Mucosa of descending colon (tissue), 3 donors: ENCODE measurements at regions of chr22 and their contacts with region 1.

Region 1: DNA sequence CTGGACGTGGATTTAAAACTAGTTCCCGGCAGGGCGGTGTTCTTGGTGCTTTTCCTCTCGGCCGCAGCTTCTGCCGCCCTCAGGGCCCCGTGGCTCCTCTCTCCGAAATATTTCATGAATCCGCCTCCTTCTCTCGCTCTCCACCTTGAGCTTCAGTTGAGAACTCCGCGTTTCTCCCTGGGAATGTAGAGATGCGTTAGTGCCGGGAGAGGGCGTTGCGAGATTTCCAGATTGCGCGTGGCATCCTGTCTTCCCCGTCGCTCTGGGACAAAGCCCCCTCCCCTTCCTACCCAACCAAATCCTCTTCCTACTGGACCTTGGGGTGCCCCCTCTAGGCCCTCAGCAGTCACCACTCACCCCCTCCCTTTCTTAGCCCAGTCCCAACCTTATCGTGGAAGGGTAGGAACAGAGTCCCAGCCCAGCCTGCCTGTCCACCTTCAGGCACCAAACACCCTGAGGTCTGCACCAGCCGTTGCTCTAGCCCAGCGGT is 15.5 kb upstream of the RAC2 start:
- DNase-seq: no peak
- ATAC-seq: peak; percentile 48
- H3K4me3 ChIP-seq: no peak overlapping the region
- H3K4me1 ChIP-seq: peaks cover 14% of the 10 kb centered on the region
- CTCF ChIP-seq: no peak

Region 2: DNA sequence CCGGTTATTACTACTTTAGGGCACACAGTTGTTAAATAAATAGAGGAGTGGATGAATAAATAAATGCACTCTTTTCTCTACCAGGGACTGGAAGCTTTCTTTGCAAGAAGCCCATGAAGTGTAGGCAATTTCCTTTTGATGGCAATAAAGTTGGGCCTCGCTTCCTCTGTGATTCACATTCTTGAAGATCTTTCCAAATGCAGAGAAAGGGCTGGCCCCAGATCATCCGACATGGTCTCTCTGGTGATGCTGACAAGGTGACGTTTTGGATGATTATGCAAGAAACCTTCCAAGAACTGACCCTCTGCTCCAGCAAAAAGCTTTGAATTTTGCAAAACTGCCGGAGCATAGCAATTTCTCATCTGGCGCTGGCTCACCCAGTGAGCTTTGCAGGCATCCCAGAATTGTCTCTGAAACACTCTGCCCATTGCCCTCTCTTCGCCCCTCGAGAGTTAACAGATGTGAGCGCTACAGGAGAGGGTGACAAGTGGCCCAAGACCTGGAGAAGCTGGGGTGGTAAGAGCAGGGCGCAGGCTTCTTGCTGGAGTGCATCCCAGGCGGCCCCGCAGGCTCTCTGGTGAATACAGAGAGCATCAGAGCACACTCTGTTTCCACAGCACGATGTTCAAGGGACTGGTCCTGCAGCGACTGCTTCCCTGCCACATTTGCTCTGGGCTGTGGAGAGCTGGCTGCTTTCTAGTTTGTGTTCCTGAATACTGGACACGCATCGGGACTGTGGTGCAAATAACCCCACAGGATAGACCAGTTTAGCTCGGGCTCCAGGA is 472.2 kb before region 1 on chr22:
- intact Hi-C with region 1: loop called in 1 of 2 experiments (anchors 5 kb)
- DNase-seq: no peak
- ATAC-seq: no peak
- H3K4me3 ChIP-seq: no peak overlapping the region
- H3K4me1 ChIP-seq: no peaks in the 10 kb centered on the region
- CTCF ChIP-seq: no peak

Region 3: GRCh38 chr22:36986242-36986821 is 273.3 kb before region 1 on chr22:
- intact Hi-C with region 1: no loop called
- DNase-seq: peak in 2 of 3 donors; percentile 71 to 72
- ATAC-seq: peak; percentile 68
- H3K4me3 ChIP-seq: no peak overlapping the region
- H3K4me1 ChIP-seq: no peaks in the 10 kb centered on the region
- CTCF ChIP-seq: peak; percentile 59

Region 4: DNA sequence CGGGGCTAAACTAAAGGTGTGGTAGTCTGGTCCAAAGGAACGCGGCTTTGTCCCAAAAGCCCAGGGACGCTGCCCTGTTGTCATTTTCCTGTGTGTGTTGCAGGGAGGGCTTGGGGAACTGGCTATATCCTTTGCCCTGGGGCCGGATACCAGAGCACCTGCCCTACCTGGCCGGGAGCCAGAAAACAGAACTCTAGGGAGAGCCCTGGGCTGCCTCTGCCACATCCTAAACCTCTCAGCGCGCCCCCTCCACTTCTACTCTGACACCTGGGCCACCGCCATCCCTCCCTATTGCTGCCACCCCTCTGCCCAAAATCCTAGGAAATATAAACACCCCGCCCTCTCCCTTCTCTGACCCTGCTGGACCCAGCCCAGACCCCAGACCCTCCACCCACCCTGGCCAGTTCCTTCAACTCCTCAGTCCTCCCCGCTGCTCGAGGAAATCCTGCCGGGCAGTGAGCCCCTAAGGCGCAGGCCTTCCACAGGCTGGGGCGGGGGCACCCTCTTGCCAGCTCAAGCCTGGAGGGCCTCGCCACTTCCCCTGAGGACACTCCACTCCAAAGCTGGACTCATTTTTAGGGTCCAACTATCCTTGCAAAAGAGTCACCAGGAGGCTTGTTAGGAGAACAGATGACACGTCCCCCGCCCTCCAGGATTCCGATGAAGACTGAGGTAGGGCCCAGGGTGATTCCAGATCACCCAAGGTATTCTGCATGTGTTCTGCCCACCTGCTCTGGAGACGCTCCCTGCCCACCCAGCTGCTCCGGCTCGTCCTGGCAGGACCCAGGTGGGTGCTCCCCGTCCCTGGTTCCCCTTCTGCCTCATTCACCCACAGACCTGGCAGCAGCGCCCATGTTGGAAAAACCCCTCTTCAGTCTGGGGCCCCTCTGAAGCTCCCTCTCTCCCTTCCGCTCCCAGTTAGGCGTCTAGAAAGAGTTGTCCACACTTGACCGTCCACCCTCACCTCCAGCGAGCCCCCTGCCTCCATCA is 195.9 kb before region 1 on chr22:
- intact Hi-C with region 1: no loop called
- DNase-seq: peak in 2 of 3 donors; percentile 53 to 67
- ATAC-seq: peak; percentile 62
- H3K4me3 ChIP-seq: no peak overlapping the region
- H3K4me1 ChIP-seq: peaks cover 8% of the 10 kb centered on the region
- CTCF ChIP-seq: no peak

Region 5: DNA sequence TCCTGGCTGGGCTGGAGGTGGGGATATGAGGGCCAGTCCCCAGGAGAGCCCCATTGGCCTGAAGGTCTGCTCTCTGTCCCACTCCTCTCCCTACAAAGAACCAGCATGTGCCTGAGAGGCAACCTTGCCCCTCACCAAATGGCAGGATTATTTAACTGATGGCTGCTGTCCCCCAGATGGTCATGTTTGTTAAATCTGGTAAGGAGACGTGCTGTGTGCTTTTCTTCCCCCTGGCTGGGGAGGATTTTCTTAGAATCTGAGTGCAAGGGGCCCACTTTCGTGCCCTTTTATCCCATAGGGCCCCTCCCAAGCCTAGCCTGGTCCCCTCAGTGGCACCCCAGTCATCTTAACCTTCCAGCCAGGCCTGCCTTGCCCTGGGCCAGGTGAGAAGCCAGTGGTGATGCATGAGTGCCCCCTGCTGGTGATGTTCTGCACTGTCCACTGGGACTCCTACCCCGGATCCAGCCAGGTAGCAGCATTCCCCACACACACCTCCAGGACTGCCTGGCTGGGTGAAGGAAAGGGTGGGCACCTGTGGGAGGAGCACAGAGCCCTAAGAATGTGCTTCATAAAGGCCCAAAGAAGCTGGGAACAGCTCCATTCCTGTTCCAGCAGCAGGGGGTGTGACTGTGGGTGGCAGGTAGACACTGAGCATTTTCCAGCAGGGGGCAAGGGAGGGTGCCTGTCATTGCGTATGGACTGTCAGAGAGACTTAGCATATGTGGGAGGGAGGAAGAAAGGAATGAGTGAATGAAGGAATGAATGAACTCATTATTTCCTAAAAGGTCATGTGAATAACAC is 197.7 kb after region 1 on chr22:
- intact Hi-C with region 1: no loop called
- DNase-seq: peak; percentile 75 to 92 (median 87)
- ATAC-seq: peak; percentile 95
- H3K4me3 ChIP-seq: no peak overlapping the region
- H3K4me1 ChIP-seq: no peaks in the 10 kb centered on the region
- CTCF ChIP-seq: peak; percentile 64